ENCODE measurements at regions of chr7 and their contacts with region 1.

Region 1: DNA sequence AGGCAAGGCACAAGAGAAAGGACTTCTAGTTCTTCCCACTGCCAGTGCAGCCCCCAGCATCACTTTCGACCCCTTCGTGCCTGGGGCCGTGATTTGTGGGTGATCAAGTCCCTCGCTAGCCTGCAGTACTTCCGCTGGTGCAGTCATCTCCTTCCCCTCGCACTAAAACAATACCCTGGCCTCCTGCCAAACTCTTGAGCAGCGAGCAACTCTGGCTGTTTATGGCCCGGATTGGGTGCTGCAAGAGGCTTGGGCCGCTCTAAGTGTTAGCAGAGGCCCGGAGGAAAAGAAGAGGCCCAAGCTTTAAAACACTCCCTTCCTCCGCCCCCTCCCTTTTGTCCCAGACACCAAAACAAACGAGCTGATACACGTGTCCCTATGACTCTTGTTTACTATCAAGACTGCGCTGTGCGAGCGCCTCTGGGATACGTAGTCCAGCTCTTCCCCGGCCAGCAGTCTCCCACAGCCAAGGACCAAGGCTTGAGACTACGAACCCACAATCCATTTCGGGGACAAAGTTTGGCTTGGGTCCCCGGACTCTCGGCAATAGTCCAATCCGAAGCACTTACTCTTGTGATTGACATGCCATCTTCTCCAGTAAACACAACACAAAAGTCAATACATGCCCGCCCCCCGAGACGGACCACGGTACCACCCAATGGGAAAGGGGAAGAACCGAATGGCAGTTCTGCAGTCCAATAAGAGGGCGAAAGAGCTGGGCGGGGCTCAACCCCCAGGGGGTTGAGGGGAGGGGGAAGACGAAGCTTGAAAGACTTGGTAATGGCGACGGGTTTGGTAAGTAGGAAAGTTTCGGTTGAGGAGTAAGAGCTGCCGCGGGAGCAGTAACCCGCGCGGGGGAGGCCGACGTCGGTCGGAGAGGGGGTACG is at the start of gene HBP1:
- DNase-seq: peak; percentile 80 to 100 (median 99)
- ATAC-seq: peak; percentile 87
- H3K4me3 ChIP-seq: peak within 1 kb of the TSS; percentile 84
- H3K4me3 Mint-ChIP-seq: peak within 1 kb of the TSS; percentile 92 to 100 (median 96)
- H3K27ac ChIP-seq: peak within 1 kb of the TSS; percentile 100
- H3K27ac Mint-ChIP-seq: peak within 1 kb of the TSS; percentile 98 to 100 (median 99)
- H3K4me1 ChIP-seq: peaks cover 28 to 35% of the 10 kb centered on the region in 2 donors
- H3K4me1 Mint-ChIP-seq: peaks cover 25 to 50% (median 41%) of the 10 kb centered on the region in 7 donors
- H3K27me3 ChIP-seq: no peaks in the 10 kb centered on the region
- H3K27me3 Mint-ChIP-seq: peaks cover 0 to 28% (median 0%) of the 10 kb centered on the region in 5 donors
- total RNA-seq, gene HBP1: 34.6 to 219 (median 124) TPM

Region 2: GRCh38 chr7:105480931-105481330 is 1687.5 kb before region 1 on chr7:
- CTCF ChIA-PET with region 1: no interaction called
- POLR2A ChIA-PET with region 1: no interaction called
- intact Hi-C with region 1: no loop called
- DNase-seq: no peak
- ATAC-seq: no peak
- H3K4me3 ChIP-seq: no peak overlapping the region
- H3K4me3 Mint-ChIP-seq: no peak overlapping the region
- H3K27ac ChIP-seq: no peak overlapping the region
- H3K27ac Mint-ChIP-seq: no peak overlapping the region
- H3K4me1 ChIP-seq: no peaks in the 10 kb centered on the region
- H3K4me1 Mint-ChIP-seq: no peaks in the 10 kb centered on the region
- H3K27me3 ChIP-seq: no peaks in the 10 kb centered on the region
- H3K27me3 Mint-ChIP-seq: no peaks in the 10 kb centered on the region

Region 3: DNA sequence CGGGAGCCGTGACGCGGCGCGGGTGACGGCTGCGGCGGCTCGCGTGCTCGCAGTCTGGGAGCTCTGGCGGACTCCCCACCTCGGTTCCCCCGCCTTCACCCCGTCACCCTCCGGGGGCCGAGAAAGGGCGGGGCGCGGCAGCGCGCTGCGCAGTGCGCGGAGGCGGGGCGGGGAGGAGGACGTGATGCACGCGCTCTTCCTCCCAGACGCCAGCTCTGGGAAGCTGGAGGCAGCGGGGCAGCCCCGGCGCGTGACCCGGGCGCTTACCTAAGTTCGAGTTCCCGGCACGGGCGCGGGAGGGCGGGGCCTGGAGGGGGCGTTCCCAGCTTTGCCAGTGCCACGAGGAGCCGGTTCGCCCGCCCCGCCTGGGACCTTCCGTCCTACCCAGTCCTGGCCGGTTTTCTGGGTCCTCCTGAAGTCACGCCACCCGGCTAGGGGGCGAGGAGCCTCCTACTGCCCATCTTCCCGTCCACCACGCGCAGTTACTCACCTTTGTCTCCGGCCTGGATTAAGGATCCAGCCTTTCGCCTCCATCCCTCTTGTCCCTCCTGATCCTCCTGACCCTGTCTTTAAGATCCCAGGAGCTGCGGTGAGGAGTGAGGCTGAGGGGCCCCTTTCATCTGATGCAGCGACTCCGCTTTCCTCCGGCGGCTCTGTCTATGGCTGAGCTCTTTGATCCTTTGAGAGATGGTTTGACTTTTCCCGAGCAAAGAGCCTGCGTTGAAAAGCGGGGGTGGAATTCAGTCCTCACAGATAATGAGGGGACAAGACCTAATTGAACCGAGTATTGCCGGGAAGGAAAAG is 883.2 kb before region 1 on chr7:
- CTCF ChIA-PET with region 1: interaction called, 3 read pairs
- POLR2A ChIA-PET with region 1: interaction called, 15 read pairs
- intact Hi-C with region 1: loop called in 1 of 2 experiments (anchors 1 kb)
- DNase-seq: peak; percentile 92 to 99 (median 96)
- ATAC-seq: peak; percentile 94
- H3K4me3 ChIP-seq: peak overlapping the region; percentile 94
- H3K4me3 Mint-ChIP-seq: peak overlapping the region; percentile 91 to 99 (median 96)
- H3K27ac ChIP-seq: peak overlapping the region; percentile 94
- H3K27ac Mint-ChIP-seq: peak overlapping the region; percentile 84 to 99 (median 98)
- H3K4me1 ChIP-seq: peaks cover 9 to 10% of the 10 kb centered on the region in 2 donors
- H3K4me1 Mint-ChIP-seq: peaks cover 17 to 46% (median 33%) of the 10 kb centered on the region in 7 donors
- H3K27me3 ChIP-seq: no peaks in the 10 kb centered on the region
- H3K27me3 Mint-ChIP-seq: peaks cover 0 to under 1% (median 0%) of the 10 kb centered on the region in 5 donors

Region 4: DNA sequence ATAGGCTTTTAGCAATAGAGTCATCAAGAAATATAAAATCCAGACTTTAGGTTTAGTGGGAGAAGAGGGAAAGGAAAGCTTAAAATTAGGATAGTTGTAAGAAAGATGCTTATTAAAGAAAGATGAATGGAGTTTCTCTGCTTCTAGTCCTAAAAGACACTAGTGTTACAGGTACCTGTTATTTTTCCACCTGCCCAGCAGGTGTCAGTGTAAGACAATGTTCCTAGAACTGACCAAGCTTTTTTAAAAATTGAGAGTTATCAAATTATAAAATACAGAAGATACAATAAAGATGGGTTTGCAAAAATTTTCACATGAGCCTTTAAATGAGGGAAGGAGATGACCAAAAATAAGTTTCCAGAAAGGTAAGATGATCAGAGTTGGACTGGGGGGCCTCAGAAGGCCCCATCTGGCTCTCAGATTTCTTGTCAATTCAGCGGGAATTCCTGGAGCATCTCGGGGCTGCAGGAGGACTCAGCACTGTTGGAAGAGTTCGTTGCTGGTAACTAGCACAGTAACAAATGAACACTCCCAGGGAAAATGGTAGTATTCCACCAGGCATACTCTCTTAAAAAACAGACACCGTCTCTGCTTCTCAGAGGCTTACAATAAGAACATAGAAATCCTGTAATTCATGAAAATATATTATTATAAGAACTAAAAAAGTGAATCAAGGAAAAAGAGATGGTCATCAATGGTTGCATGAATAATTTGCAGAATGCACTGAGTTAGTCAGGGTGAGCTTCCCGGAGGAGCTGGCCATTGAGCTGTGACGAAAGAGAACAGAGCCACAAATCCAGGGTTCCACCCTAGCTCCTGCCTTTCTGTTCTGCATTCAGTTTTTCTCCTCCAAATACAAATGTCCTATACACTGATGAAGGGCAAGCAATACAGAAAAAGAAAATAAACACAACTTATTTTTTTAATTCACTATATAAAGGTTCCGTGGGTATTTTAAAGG is 375.2 kb before region 1 on chr7:
- CTCF ChIA-PET with region 1: no interaction called
- POLR2A ChIA-PET with region 1: interaction called, 3 read pairs
- intact Hi-C with region 1: loop called (anchors 1 to 5 kb)
- DNase-seq: peak in 6 of 9 donors; percentile 31 to 59 (median 51)
- ATAC-seq: peak; percentile 76
- H3K4me3 ChIP-seq: no peak overlapping the region
- H3K4me3 Mint-ChIP-seq: no peak overlapping the region
- H3K27ac ChIP-seq: no peak overlapping the region
- H3K27ac Mint-ChIP-seq: no peak overlapping the region
- H3K4me1 ChIP-seq: no peaks in the 10 kb centered on the region
- H3K4me1 Mint-ChIP-seq: peaks cover 0 to 4% (median 0%) of the 10 kb centered on the region in 7 donors
- H3K27me3 ChIP-seq: no peaks in the 10 kb centered on the region
- H3K27me3 Mint-ChIP-seq: no peaks in the 10 kb centered on the region

Region 5: DNA sequence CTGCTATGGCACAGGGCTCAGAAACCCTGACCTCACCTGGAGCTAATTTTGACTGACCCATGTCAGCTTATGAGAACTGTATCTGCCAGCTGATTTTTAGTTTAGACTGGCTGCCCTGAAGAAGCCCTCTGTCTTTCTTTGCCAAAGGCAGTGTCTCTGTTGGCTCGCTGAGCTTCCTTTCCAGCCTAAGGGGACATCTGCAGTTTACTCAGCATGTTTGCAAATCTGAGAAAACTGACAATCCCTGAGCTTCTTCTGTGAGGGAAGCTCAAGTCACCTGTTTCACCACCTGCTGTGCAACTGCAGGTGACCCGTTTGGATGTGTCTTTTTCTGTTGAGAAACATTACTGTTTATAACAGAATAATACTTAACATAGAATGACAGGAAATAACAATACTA is 78.0 kb before region 1 on chr7:
- CTCF ChIA-PET with region 1: no interaction called
- POLR2A ChIA-PET with region 1: no interaction called
- intact Hi-C with region 1: no loop called
- DNase-seq: no peak
- ATAC-seq: no peak
- H3K4me3 ChIP-seq: no peak overlapping the region
- H3K4me3 Mint-ChIP-seq: no peak overlapping the region
- H3K27ac ChIP-seq: no peak overlapping the region
- H3K27ac Mint-ChIP-seq: no peak overlapping the region
- H3K4me1 ChIP-seq: no peaks in the 10 kb centered on the region
- H3K4me1 Mint-ChIP-seq: peaks cover 0 to 5% (median 0%) of the 10 kb centered on the region in 7 donors
- H3K27me3 ChIP-seq: no peaks in the 10 kb centered on the region
- H3K27me3 Mint-ChIP-seq: peaks cover 0 to 6% (median 0%) of the 10 kb centered on the region in 5 donors

Region 6: GRCh38 chr7:107118112-107118900 is 50.2 kb before region 1 on chr7:
- CTCF ChIA-PET with region 1: no interaction called
- POLR2A ChIA-PET with region 1: no interaction called
- intact Hi-C with region 1: no loop called
- DNase-seq: no peak
- ATAC-seq: no peak
- H3K4me3 ChIP-seq: no peak overlapping the region
- H3K4me3 Mint-ChIP-seq: no peak overlapping the region
- H3K27ac ChIP-seq: no peak overlapping the region
- H3K27ac Mint-ChIP-seq: no peak overlapping the region
- H3K4me1 ChIP-seq: no peaks in the 10 kb centered on the region
- H3K4me1 Mint-ChIP-seq: peaks cover 0 to 1% (median 0%) of the 10 kb centered on the region in 7 donors
- H3K27me3 ChIP-seq: no peaks in the 10 kb centered on the region
- H3K27me3 Mint-ChIP-seq: peaks cover 0 to 16% (median 11%) of the 10 kb centered on the region in 5 donors

Region 7: DNA sequence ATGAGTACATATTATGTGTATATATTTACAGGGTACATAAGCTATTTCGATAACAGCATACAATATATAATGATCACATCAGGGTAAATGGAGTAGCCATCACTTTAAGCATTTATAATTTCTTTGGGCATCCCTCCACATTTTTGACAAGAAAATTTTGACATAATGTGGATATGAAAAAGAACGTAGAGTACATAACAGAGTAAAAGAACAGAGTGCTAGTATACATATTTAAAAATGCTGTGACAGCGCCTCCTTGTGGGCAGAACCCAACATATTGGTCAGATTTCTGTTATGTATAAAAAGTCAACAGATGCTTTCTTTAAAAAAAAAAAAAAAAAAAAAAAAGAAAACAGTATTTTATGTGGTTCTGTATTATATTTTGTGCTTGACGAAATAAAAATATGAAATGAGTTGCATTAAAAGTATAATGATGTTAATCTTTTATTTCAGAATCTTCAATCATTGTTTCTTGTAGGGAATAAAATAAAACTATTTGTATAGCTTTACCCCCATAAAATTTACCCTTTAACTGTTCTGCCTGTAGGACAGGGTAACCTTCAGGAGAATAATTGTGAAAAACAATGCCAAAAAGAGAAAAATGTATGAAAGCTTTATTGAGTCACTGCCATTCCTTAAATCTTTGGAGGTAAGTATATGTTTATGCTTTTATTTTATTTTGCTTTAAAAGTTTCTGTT is 18.0 kb before region 1 on chr7:
- CTCF ChIA-PET with region 1: interaction called, 67 read pairs
- POLR2A ChIA-PET with region 1: interaction called, 35 read pairs
- intact Hi-C with region 1: loop called (anchors 1 kb)
- DNase-seq: peak; percentile 45 to 79 (median 72)
- ATAC-seq: peak; percentile 88
- H3K4me3 ChIP-seq: no peak overlapping the region
- H3K4me3 Mint-ChIP-seq: no peak overlapping the region
- H3K27ac ChIP-seq: no peak overlapping the region
- H3K27ac Mint-ChIP-seq: no peak overlapping the region
- H3K4me1 ChIP-seq: no peaks in the 10 kb centered on the region
- H3K4me1 Mint-ChIP-seq: peaks cover 0 to 12% (median 4%) of the 10 kb centered on the region in 7 donors
- H3K27me3 ChIP-seq: no peaks in the 10 kb centered on the region
- H3K27me3 Mint-ChIP-seq: peaks cover 0 to 7% (median 3%) of the 10 kb centered on the region in 5 donors

Region 8: GRCh38 chr7:107579885-107580715 is 411.6 kb after region 1 on chr7 and contains the start of gene BCAP29:
- CTCF ChIA-PET with region 1: no interaction called
- POLR2A ChIA-PET with region 1: no interaction called
- intact Hi-C with region 1: loop called in 1 of 2 experiments (anchors 1 kb)
- DNase-seq: peak; percentile 50 to 83 (median 65)
- ATAC-seq: peak; percentile 98
- H3K4me3 ChIP-seq: peak within 1 kb of the TSS; percentile 97
- H3K4me3 Mint-ChIP-seq: peak within 1 kb of the TSS; percentile 83 to 94 (median 90)
- H3K27ac ChIP-seq: peak within 1 kb of the TSS; percentile 72
- H3K27ac Mint-ChIP-seq: peak within 1 kb of the TSS; percentile 43 to 93 (median 87)
- H3K4me1 ChIP-seq: peaks cover 4 to 8% of the 10 kb centered on the region in 2 donors
- H3K4me1 Mint-ChIP-seq: peaks cover 6 to 34% (median 25%) of the 10 kb centered on the region in 7 donors
- H3K27me3 ChIP-seq: no peaks in the 10 kb centered on the region
- H3K27me3 Mint-ChIP-seq: no peaks in the 10 kb centered on the region
- total RNA-seq, gene BCAP29: 10.5 to 38.7 (median 14.4) TPM

Region 9: GRCh38 chr7:108525985-108526767 is 1357.7 kb after region 1 on chr7 and contains the start of gene PNPLA8:
- CTCF ChIA-PET with region 1: no interaction called
- POLR2A ChIA-PET with region 1: interaction called, 7 read pairs
- intact Hi-C with region 1: loop called (anchors 1 kb)
- DNase-seq: peak; percentile 100
- ATAC-seq: peak; percentile 94
- H3K4me3 ChIP-seq: peak within 1 kb of the TSS; percentile 94
- H3K4me3 Mint-ChIP-seq: peak within 1 kb of the TSS; percentile 84 to 98 (median 97)
- H3K27ac ChIP-seq: peak within 1 kb of the TSS; percentile 89
- H3K27ac Mint-ChIP-seq: peak within 1 kb of the TSS; percentile 97 to 100 (median 99)
- H3K4me1 ChIP-seq: peaks cover 18% of the 10 kb centered on the region in 2 donors
- H3K4me1 Mint-ChIP-seq: peaks cover 18 to 46% (median 33%) of the 10 kb centered on the region in 7 donors
- H3K27me3 ChIP-seq: no peaks in the 10 kb centered on the region
- H3K27me3 Mint-ChIP-seq: peaks cover 0 to 4% (median 0%) of the 10 kb centered on the region in 5 donors
- total RNA-seq, gene PNPLA8: 18.5 to 89.9 (median 29.8) TPM

Measured in naive thymus-derived CD4-positive, alpha-beta T cell (primary cell).